Activated T-helper 2 cell treated with anti-CD3 and anti-CD28 coated beads, Interferon-gamma antibody, Interleukin-2, Interleukin-4, amounts not matched to agents 10 μg/mL and 5 μg/mL and 100 μg/mL, durations not matched to agents 14 hours and 24 hours and 36 hours (primary cell): ENCODE measurements at regions of chr5 and their contacts with region 1.

Region 1: DNA sequence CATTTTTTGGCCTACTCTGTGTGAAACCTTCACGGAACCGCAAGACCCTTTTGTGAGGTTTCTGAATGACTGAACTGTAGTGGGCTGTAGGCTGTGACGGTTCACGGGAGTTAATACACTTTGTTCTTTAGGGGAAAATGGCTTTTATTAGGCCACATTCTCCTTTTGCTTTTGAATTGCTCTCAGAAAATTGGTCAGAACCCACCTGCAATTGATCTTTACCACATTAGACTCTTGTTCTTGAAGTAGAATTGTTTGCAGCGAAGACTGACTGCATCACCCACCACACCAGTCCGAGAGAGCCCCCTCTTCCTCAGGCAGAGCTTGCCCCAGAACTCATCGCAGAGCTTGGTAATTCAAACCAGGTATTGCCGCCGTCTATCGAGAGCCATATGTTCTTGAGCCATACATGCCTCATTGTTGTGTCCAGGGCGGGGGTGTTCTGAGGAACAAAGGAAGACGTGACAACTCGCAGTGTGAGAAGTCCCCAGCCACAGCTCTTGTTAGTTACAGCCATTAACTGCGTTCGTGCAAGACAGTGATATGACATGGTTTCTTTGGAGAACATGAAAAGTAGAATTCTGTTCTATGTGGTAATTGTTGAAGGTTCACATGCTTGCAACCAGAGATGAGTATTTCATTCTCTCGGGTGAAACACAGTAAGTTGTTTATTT is 166.4 kb upstream of the OTULINL start:
- DNase-seq: no peak
- H3K4me3 Mint-ChIP-seq: peak overlapping the region; percentile 43
- H3K27ac Mint-ChIP-seq: peak overlapping the region; percentile 91
- H3K4me1 Mint-ChIP-seq: peaks cover 69% of the 10 kb centered on the region
- H3K27me3 Mint-ChIP-seq: peaks cover 1% of the 10 kb centered on the region

Region 2: DNA sequence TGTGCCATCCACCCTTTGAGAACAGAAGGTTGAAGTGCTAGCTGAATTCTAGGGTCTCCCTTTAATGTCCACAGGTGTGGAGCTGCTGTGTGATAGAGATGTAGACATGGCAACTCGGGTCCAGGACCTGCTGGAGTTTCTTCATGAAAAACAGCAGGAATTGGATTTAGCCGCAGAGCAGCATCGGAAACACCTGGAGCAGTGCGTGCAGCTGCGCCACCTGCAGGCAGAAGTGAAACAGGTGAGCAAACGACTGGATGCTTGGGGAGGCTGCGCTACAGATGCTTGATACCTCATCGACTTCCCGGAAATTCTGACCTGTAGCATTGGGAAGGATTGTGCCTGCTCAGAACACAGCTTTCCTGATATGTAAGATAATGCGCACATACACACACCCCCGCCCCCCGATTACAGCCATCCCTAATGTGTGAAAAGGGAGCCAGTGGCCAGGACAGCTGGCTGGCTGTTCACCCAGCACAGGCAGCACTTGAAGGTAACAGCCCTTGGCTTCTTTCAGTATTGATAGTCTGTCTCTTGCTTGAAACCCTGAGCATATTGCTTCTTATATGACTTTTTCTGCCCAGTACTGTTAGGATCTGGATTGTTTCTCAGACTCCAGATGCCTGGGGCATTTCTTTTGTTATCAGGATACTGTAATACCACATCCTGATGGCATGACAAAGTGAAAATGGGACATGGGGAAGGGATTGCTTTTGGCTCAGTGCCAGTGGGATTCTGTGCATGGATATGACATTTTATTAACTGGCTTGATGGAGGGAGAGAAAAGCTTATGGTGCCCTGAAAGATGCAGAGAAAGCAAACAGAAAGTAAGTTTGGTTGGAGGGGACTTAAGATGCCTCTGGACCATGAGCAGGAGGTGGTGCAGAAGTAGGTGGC is 50.3 kb before region 1 on chr5:
- intact Hi-C with region 1: loop called (anchors 2 kb)
- DNase-seq: no peak
- H3K4me3 Mint-ChIP-seq: no peak overlapping the region
- H3K27ac Mint-ChIP-seq: no peak overlapping the region
- H3K4me1 Mint-ChIP-seq: peaks cover 48% of the 10 kb centered on the region
- H3K27me3 Mint-ChIP-seq: peaks cover 2% of the 10 kb centered on the region

Region 3: DNA sequence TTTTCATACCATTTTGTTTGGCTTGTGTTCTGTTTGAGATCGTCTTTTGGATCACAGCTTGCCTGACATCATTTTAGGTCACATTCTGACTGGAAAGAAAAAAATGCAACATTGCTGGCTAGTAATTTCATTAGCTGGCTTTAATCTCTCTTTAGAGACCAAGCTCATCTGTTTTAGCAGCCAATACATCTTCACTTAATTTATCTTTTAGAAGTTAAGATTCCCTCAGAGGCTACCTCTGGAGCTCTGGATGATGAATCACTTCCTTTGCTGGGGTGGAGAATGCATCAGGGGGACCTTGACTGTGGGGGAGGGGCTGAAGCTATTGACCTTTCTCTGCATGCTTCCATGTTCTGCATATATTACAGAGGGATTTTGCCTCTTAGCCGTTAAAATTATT is 15.1 kb before region 1 on chr5:
- intact Hi-C with region 1: no loop called
- DNase-seq: no peak
- H3K4me3 Mint-ChIP-seq: no peak overlapping the region
- H3K27ac Mint-ChIP-seq: no peak overlapping the region
- H3K4me1 Mint-ChIP-seq: peaks cover 47% of the 10 kb centered on the region
- H3K27me3 Mint-ChIP-seq: peaks cover 2% of the 10 kb centered on the region

Region 4: DNA sequence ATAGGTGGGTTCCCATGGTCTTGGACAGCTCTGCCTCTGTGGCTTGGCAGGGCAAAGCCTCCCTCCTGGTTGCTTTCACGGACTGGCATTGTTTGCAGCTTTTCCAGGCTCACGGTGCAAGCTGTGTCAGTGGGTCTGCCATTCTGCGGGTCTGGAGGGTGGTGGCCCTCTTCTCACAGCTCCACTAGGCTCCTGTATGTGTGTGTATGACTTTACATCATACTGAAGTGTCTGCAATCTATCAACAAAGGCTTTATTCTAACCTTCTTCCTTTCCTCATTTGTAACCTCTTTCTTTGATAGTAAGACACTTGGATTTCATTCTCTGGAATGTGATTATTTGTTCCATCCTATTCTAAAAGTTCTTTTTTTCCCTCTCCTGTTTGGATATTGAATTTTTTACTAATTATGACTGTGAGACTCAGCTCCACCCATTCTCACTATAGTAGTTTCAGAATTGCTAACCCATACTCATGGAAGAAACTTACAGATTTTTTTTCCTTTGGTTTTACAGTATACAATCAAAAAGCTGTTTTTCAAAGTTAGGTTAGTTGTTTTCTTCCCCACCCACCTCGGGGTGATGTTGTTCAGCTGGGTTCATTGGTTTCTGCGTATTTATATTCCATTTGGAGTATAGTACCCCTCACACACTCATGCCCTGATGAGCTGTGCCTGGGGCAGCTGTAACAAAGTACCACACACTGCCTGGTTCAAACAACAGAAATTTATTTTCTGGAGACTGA is 21.8 kb after region 1 on chr5:
- intact Hi-C with region 1: loop called (anchors 1 kb)
- DNase-seq: no peak
- H3K4me3 Mint-ChIP-seq: no peak overlapping the region
- H3K27ac Mint-ChIP-seq: peak overlapping the region; percentile 62
- H3K4me1 Mint-ChIP-seq: peaks cover 32% of the 10 kb centered on the region
- H3K27me3 Mint-ChIP-seq: peaks cover 2% of the 10 kb centered on the region

Region 5: DNA sequence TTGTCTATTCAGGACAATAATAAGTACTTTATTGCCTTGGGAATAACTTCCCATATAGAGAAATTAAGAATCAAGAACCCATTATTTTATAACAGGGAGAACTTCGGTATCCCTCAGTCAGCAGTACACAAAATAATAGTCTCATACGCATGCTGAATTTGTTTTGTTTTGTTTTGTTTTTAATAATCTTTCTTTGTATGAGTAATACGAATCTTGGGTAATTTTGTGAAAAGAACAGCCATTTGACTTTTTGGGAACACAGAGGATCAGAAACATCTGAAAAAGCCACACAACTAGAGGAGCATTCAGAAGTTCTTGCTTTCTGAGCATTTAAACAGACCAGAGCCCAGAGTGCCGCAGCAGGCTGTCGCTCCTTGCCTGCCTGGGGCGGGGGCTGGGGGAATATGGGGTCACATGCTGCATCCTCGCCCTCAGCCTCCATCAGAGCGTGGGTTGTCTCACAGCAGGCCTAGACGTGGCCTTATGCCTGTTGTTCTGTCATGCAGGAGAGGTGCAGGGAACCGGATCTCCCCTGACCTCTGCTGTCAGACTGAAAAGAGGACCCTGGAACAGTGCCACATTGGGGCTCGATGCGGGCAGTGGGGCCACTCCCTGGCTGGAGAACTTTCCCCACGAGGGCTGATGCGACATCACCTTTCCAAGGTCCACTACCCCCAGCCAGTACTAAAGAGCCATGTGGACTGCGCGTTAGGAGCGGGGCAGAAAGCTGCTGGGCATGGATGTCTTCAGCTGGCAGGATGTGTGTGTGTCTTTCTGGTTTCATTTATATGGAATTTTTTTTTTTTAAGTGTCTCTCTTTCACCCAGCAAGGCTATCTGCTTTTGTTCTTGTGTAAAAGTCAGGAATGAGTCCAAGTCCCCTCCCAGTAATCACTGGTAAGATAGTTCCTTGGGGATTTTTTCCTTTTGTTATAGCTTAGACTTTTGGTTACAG is 33.1 kb after region 1 on chr5:
- intact Hi-C with region 1: no loop called
- DNase-seq: no peak
- H3K4me3 Mint-ChIP-seq: no peak overlapping the region
- H3K27ac Mint-ChIP-seq: peak overlapping the region; percentile 35
- H3K4me1 Mint-ChIP-seq: peaks cover 13% of the 10 kb centered on the region
- H3K27me3 Mint-ChIP-seq: no peaks in the 10 kb centered on the region

Region 6: DNA sequence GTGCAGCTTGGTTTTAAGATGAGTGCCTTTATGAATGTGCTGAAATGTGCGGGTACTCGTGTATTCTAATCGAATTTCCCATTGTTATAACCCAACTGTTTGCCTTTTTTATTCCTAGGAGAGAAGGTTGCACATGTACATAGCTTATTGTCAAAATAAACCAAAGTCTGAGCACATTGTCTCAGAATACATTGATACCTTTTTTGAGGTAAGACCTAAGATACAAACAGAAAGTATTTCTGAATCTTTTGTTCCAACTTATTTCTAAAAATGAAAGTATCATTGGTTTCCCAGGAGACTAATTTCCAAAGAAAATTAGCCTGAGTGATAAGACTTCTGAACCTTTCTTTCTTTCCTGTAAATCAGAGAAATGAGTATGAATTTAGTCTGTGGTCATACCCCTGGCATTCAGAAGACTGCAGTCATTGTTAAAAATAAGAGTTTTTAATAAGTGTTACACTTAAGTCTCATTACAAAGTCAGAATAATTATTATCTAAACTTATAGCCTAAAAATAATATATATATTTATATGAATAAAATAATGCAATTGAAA is 64.1 kb after region 1 on chr5:
- intact Hi-C with region 1: loop called (anchors 1 kb)
- DNase-seq: no peak
- H3K4me3 Mint-ChIP-seq: no peak overlapping the region
- H3K27ac Mint-ChIP-seq: peak overlapping the region; percentile 79
- H3K4me1 Mint-ChIP-seq: peaks cover 18% of the 10 kb centered on the region
- H3K27me3 Mint-ChIP-seq: no peaks in the 10 kb centered on the region